ENCODE measurements at regions of chr11 and their contacts with region 1.

Region 1: GRCh38 chr11:12281571-12282478 is 95.5 kb upstream of the PARVA start:
- DNase-seq: peak; percentile 87
- H3K4me3 Mint-ChIP-seq: no peak overlapping the region
- H3K27ac Mint-ChIP-seq: no peak overlapping the region
- H3K4me1 Mint-ChIP-seq: peaks cover 2% of the 10 kb centered on the region
- H3K27me3 Mint-ChIP-seq: no peaks in the 10 kb centered on the region

Region 2: DNA sequence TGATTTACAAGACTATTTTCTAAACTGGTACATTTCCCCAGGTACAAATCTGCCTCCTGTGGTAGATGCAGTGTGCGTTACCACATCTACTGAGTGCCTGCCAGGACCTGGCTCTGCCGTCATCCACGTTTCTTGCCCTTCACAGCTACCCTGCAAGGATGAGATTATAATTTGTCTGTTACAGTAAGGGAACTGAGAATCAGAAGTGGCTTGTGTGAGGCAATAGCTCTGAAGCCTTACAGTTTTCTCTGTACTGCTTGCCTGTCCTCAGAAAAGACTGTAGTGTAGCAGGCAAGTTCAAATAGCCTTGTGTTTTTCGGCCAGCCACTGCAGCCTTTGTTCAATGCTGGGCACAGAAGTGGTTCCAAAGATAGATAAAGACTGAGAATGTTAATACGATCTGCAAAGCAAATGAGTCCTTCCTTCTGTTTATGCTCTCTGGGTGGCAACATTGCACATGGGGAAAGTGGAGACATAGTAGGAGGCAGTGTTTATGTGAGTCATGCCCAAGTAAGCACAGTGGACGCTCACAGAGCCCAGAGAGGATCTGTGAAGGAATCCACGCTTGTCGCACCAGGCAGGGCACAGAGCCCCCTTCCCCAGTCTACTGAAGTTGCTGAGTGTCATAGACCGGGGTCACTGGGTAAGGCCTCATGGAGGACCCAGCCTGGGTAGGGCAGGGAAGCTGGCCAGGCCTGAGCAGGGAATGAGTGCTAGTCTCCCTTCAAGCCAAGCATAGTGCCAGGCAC is 122.3 kb before region 1 on chr11:
- CTCF ChIA-PET with region 1: no interaction called
- intact Hi-C with region 1: loop called (anchors 5 kb)
- DNase-seq: no peak
- H3K4me3 Mint-ChIP-seq: no peak overlapping the region
- H3K27ac Mint-ChIP-seq: no peak overlapping the region
- H3K4me1 Mint-ChIP-seq: peaks cover 42% of the 10 kb centered on the region
- H3K27me3 Mint-ChIP-seq: no peaks in the 10 kb centered on the region

Region 3: GRCh38 chr11:12269104-12269441 is 12.8 kb before region 1 on chr11:
- CTCF ChIA-PET with region 1: interaction called, 22 read pairs
- intact Hi-C with region 1: no loop called
- DNase-seq: no peak
- H3K4me3 Mint-ChIP-seq: no peak overlapping the region
- H3K27ac Mint-ChIP-seq: no peak overlapping the region
- H3K4me1 Mint-ChIP-seq: no peaks in the 10 kb centered on the region
- H3K27me3 Mint-ChIP-seq: no peaks in the 10 kb centered on the region

Region 4: DNA sequence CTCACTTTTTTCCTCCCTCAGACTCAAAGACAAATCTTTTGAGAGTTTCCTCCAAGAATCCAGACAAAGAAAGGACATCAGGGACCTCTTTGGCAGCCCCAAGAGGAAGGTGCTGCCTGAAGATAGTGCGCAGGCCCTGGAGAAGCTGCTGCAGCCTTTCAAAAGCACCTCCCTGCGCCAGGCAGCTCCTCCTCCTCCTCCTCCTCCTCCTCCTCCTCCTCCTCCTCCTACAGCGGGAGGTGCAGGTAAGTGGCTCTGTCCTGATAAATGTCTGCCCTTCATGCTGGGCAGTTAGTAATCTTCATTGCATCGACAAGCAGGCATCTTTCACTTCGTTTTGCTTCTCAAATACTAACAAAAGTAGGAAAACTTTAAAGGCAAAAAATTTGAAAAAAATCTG is 12.8 kb after region 1 on chr11:
- CTCF ChIA-PET with region 1: interaction called, 12 read pairs
- intact Hi-C with region 1: no loop called
- DNase-seq: no peak
- H3K4me3 Mint-ChIP-seq: no peak overlapping the region
- H3K27ac Mint-ChIP-seq: no peak overlapping the region
- H3K4me1 Mint-ChIP-seq: peaks cover 7% of the 10 kb centered on the region
- H3K27me3 Mint-ChIP-seq: no peaks in the 10 kb centered on the region

Region 5: GRCh38 chr11:12312132-12312531 is 30.3 kb after region 1 on chr11:
- CTCF ChIA-PET with region 1: no interaction called
- intact Hi-C with region 1: no loop called
- DNase-seq: no peak
- H3K4me3 Mint-ChIP-seq: no peak overlapping the region
- H3K27ac Mint-ChIP-seq: no peak overlapping the region
- H3K4me1 Mint-ChIP-seq: no peaks in the 10 kb centered on the region
- H3K27me3 Mint-ChIP-seq: no peaks in the 10 kb centered on the region

Measured in activated naive CD4-positive, alpha-beta T cell treated with anti-CD3 and anti-CD28 coated beads for 36 hours (primary cell).